ENCODE measurements at regions of chr1 and their contacts with region 1.

Region 1: GRCh38 chr1:9573723-9574122 is 15.0 kb upstream of the TMEM201 start:
- DNase-seq: no peak
- ATAC-seq: no peak
- H3K4me3 ChIP-seq: no peak overlapping the region
- H3K4me1 ChIP-seq: no peaks in the 10 kb centered on the region
- CTCF ChIP-seq: no peak

Region 2: GRCh38 chr1:9494929-9495758 is 78.6 kb before region 1 on chr1:
- intact Hi-C with region 1: loop called (anchors 2 to 5 kb)
- DNase-seq: peak; percentile 62 to 69 (median 62)
- ATAC-seq: peak; percentile 87
- H3K4me3 ChIP-seq: no peak overlapping the region
- H3K4me1 ChIP-seq: no peaks in the 10 kb centered on the region
- CTCF ChIP-seq: peak; percentile 97

Measured in mucosa of descending colon (tissue), 3 donors.